GM18951 (cell line): ENCODE measurements at regions of chr19 and their contacts with region 1.

Region 1: GRCh38 chr19:54882758-54883157 is 8.7 kb downstream of the FCAR start:
- POLR2A ChIP-seq: no peak

Region 2: GRCh38 chr19:55058781-55059539 is 176.2 kb after region 1 on chr19:
- in situ Hi-C with region 1: no loop called
- POLR2A ChIP-seq: no peak

Region 3: DNA sequence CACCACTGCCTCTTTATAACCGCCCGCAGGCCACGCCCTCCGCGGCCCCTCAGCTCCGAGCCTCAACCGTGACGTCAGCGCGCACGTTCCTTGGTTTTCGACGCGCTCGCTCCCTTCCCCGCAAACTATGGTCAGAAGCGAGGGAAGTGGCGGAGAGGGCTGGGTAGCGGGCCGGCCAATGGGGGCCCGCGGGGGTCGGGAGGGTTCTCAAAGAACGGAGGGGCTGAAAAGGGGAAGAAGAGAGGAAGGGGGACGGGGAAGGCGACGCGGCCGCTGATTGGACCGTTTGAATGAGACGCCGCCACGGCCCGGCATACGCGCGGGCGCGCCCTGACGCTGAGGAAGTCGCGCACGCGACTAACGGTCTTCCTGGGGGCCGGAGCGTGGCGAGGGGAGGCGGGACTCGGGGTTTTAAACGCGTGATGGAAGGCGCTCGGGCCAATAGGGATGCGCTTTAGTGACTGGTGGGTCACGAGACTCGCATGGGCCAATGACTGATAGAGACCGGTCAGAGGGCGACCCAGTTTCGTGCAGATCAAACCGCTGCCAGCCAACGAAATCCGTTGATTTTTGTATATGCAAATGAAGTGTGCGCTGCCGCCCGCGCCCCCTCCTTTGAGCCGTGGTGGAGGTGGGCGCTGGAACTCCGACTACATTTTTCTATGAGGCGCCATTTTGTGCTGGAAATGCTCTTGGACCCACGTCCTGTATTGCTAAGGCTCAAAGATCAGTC is 525.2 kb after region 1 on chr19:
- in situ Hi-C with region 1: loop called (anchors 25 kb)
- POLR2A ChIP-seq: peak; percentile 31